ENCODE measurements at regions of chr16 and their contacts with region 1.

Region 1: DNA sequence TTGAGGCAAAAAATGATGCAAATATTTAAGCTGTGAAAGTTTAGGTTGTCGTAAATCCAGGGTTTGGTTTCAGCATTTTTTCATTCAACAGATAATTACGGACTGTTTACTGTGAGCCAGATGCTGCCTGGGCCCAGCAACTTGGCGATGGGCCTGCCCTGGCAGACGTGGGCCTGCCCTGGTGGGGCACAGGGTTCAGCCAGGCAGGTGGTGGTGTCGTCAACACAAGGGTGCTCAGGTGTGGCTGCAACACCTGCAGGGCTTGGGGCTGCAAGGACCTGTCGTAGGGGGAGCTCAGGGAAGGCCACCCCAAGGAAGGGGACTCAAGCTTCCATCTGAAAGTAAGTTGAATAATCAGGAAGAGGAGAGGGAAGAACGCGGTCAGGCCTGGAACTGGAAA is 15.1 kb downstream of the ZC3H18 start:
- DNase-seq: no peak
- H3K4me3 ChIP-seq: no peak overlapping the region
- CTCF ChIP-seq: no peak

Region 2: DNA sequence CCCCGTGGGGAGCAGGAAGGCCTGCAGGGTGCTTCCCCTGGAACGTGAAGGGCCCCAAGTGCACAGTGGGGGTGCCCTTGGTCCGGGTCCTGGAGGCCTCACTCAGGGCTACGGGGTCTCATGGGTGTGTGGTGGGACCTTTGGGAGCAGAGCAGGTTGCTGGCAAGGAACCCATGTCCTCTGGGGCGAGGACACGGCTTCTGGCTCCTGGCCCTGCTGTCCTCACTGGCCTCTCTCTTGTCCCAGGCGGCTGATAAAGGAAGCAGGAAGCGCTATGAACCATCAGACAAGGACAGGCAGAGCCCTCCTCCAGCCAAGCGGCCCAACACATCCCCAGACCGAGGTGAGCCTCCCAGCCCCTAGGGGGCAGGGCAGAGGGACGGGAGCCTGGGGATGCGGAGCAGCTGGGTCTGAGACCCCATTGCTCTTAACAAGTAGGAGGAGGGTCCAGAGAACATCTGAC is 43.3 kb after region 1 on chr16:
- in situ Hi-C with region 1: loop called (anchors 5 kb)
- DNase-seq: no peak
- H3K4me3 ChIP-seq: no peak overlapping the region
- CTCF ChIP-seq: peak; percentile 52

Measured in astrocyte of the cerebellum (primary cell).